ENCODE measurements at regions of chr11 and their contacts with region 1.

Region 1: GRCh38 chr11:36702330-36703055 is 104.5 kb upstream of the RAG2 start:
- H3K4me3 ChIP-seq: no peak overlapping the region
- H3K27ac ChIP-seq: no peak overlapping the region
- H3K4me1 ChIP-seq: no peaks in the 10 kb centered on the region
- CTCF ChIP-seq: peak; percentile 72; the same call in 1 of the 2 replicates

Region 2: GRCh38 chr11:36683818-36684217 is 18.7 kb before region 1 on chr11:
- CTCF ChIA-PET with region 1: no interaction called
- POLR2A ChIA-PET with region 1: no interaction called
- H3K4me3 ChIP-seq: no peak overlapping the region
- H3K27ac ChIP-seq: no peak overlapping the region
- H3K4me1 ChIP-seq: no peaks in the 10 kb centered on the region
- CTCF ChIP-seq: no peak

Region 3: GRCh38 chr11:36738292-36738861 is 35.9 kb after region 1 on chr11:
- CTCF ChIA-PET with region 1: interaction called, 261 read pairs
- POLR2A ChIA-PET with region 1: no interaction called
- H3K4me3 ChIP-seq: no peak overlapping the region
- H3K27ac ChIP-seq: no peak overlapping the region
- H3K4me1 ChIP-seq: no peaks in the 10 kb centered on the region
- CTCF ChIP-seq: no peak

Region 4: GRCh38 chr11:36818407-36818806 is 115.9 kb after region 1 on chr11:
- CTCF ChIA-PET with region 1: interaction called, 15 read pairs
- POLR2A ChIA-PET with region 1: no interaction called
- H3K4me3 ChIP-seq: no peak overlapping the region
- H3K27ac ChIP-seq: no peak overlapping the region
- H3K4me1 ChIP-seq: no peaks in the 10 kb centered on the region
- CTCF ChIP-seq: no peak

Measured in HEK293 (cell line).